Left lung (tissue), 14 donors: ENCODE measurements at regions of chr5 and their contacts with region 1.

Region 1: GRCh38 chr5:62985749-62986148 is 407.1 kb downstream of the LRRC70 start:
- DNase-seq: no peak
- ATAC-seq: no peak
- H3K4me3 ChIP-seq: no peak overlapping the region
- H3K27ac ChIP-seq: no peak overlapping the region
- H3K4me1 ChIP-seq: no peaks in the 10 kb centered on the region
- H3K27me3 ChIP-seq: no peaks in the 10 kb centered on the region
- CTCF ChIP-seq: no peak

Region 2: GRCh38 chr5:63029891-63030290 is 44.1 kb after region 1 on chr5:
- intact Hi-C with region 1: loop called in 1 of 2 experiments (anchors 1 kb)
- DNase-seq: peak in 1 of 4 donors; percentile 50
- ATAC-seq: peak; percentile 35
- H3K4me3 ChIP-seq: no peak overlapping the region
- H3K27ac ChIP-seq: no peak overlapping the region
- H3K4me1 ChIP-seq: no peaks in the 10 kb centered on the region
- H3K27me3 ChIP-seq: no peaks in the 10 kb centered on the region
- CTCF ChIP-seq: no peak

Region 3: DNA sequence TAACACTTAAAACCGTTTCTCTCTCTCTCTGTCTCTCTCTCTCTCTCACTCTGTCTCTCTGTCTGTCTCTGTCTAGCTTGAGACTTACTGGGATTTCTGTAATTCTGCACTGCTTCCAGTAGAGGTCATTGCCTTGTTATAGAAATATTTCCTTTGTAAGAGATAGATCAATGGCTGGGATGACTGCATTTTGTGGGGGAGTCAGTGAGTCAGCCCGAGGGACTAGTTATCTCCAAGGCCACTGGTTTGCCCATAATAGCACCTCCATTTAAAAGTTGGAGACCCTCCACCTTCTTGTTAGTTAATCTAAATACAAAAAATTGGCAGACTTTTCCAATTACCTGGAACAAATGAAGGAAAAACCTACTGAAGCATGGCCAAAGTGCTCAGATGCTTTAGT is 140.1 kb after region 1 on chr5:
- intact Hi-C with region 1: no loop called
- DNase-seq: peak in 1 of 4 donors; percentile 13
- ATAC-seq: peak; percentile 83
- H3K4me3 ChIP-seq: no peak overlapping the region
- H3K27ac ChIP-seq: no peak overlapping the region
- H3K4me1 ChIP-seq: no peaks in the 10 kb centered on the region
- H3K27me3 ChIP-seq: no peaks in the 10 kb centered on the region
- CTCF ChIP-seq: peak in 1 of 2 donors; percentile 37